BJ (cell line): ENCODE measurements at regions of chr5 and their contacts with region 1.

Region 1: GRCh38 chr5:76805850-76806505 is 12.9 kb upstream of the F2RL1 start:
- DNase-seq: peak; percentile 87
- H3K4me3 ChIP-seq: no peak overlapping the region
- H3K27me3 ChIP-seq: peaks cover 2% of the 10 kb centered on the region
- CTCF ChIP-seq: no peak

Region 2: DNA sequence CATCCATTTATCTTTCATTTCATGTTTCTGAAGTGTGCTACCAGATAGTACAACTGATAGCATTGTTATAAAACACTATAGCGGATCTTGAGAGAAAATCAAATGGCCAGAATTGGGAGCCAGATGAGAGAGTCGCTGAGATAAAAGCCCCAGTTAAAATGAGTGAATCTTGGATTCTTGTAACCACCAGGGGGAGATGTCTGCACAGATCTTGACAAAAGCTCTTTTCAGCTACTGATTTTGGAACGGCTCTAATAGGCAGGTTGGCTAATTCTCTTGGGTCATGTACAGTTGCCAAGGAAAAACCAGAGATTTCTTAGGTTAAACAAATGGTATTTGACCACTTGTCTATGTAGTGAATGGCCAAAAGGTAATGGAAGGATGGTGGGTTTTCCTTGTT is 204.5 kb before region 1 on chr5:
- CTCF ChIA-PET with region 1: no interaction called
- POLR2A ChIA-PET with region 1: no interaction called
- DNase-seq: no peak
- H3K4me3 ChIP-seq: no peak overlapping the region
- H3K27me3 ChIP-seq: no peaks in the 10 kb centered on the region
- CTCF ChIP-seq: peak; percentile 70

Region 3: DNA sequence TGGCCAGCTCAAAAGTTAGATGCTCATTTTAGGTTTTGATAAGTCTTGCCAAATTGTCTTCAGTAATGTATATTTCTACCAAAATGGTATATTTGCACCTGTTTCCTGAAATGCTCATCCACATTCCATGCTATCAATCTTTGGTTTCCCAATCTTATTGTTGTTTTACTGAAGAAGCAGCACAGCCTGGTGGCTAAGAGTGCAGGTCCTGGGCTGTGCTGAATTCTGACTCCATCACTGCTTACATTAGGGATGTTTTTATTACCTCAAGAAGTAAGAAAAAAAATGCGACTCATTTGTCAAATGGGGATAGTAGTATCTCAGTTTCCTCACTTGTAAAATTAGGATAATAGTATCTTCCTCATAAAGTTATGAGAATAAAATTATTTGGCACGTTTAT is 30.2 kb after region 1 on chr5:
- CTCF ChIA-PET with region 1: no interaction called
- POLR2A ChIA-PET with region 1: interaction called, 14 read pairs
- DNase-seq: no peak
- H3K4me3 ChIP-seq: no peak overlapping the region
- H3K27me3 ChIP-seq: no peaks in the 10 kb centered on the region
- CTCF ChIP-seq: 0 out of 2 replicates have a peak, but pooled peaks have one; percentile 7

Region 4: GRCh38 chr5:76960004-76960625 is 154.1 kb after region 1 on chr5:
- CTCF ChIA-PET with region 1: no interaction called
- POLR2A ChIA-PET with region 1: interaction called, 15 read pairs
- DNase-seq: no peak
- H3K4me3 ChIP-seq: no peak overlapping the region
- H3K27me3 ChIP-seq: peaks cover 9% of the 10 kb centered on the region; the same call in 1 of the 2 replicates
- CTCF ChIP-seq: no peak